ENCODE measurements at regions of chr2 and their contacts with region 1.

Region 1: DNA sequence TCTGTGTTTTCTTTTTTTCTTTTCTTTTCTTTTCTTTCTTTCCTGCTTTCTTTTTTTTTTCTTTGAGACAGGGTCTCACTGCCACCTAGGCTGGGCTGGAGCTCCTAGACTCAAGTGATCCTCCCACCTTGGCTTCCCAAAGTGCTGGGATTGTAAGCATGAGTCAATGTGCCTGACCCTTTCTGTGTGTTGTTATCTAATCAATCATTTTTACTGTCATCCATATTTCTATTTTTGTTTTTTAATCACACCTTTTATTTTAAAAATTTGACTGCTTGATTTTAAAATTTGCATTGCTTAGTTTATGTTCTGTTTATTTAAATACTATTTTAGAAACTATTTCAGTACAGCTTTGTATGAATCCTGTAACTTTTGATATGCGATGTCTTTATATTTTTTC is 19.2 kb downstream of the LCLAT1 start:
- DNase-seq: no peak
- H3K4me3 ChIP-seq: no peak overlapping the region
- H3K27ac ChIP-seq: no peak overlapping the region
- H3K4me1 ChIP-seq: no peaks in the 10 kb centered on the region
- H3K27me3 ChIP-seq: no peaks in the 10 kb centered on the region
- CTCF ChIP-seq: no peak

Region 2: GRCh38 chr2:29802986-29803385 is 663.2 kb before region 1 on chr2:
- CTCF ChIA-PET with region 1: interaction called, 10 read pairs
- POLR2A ChIA-PET with region 1: no interaction called
- intact Hi-C with region 1: no loop called
- DNase-seq: no peak
- H3K4me3 ChIP-seq: no peak overlapping the region
- H3K27ac ChIP-seq: no peak overlapping the region
- H3K4me1 ChIP-seq: no peaks in the 10 kb centered on the region
- H3K27me3 ChIP-seq: peaks cover 41% of the 10 kb centered on the region; the same call in 1 of the 2 replicates
- CTCF ChIP-seq: no peak

Region 3: GRCh38 chr2:30346471-30347169 is 119.6 kb before region 1 on chr2:
- CTCF ChIA-PET with region 1: no interaction called
- POLR2A ChIA-PET with region 1: no interaction called
- intact Hi-C with region 1: no loop called
- DNase-seq: no peak
- H3K4me3 ChIP-seq: no peak overlapping the region
- H3K27ac ChIP-seq: no peak overlapping the region
- H3K4me1 ChIP-seq: no peaks in the 10 kb centered on the region
- H3K27me3 ChIP-seq: no peaks in the 10 kb centered on the region
- CTCF ChIP-seq: no peak

Region 4: DNA sequence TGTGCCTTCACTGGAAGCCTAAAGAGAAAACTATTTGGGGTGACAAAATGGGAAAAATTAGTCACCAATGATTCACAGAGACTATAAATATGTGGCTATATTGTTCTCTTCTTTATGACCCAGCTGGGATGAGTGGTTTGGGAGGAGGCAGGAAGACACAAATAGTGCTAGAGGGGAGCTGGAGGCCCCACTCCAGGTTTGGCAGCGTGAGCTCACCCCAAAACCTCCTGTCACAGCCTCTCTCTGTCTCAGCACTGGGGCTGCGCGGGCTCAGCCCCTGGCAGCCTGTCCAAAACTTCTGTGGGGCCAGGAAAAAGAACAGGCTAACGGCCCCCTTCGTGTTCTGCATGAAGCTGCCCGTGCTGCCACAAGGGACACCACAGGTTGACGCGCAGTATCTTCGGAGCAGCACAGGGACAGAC is 92.3 kb before region 1 on chr2:
- CTCF ChIA-PET with region 1: no interaction called
- POLR2A ChIA-PET with region 1: no interaction called
- intact Hi-C with region 1: no loop called
- DNase-seq: peak in 1 of 2 experiments; percentile 49
- H3K4me3 ChIP-seq: no peak overlapping the region
- H3K27ac ChIP-seq: no peak overlapping the region
- H3K4me1 ChIP-seq: peaks cover 7% of the 10 kb centered on the region
- H3K27me3 ChIP-seq: no peaks in the 10 kb centered on the region
- CTCF ChIP-seq: no peak

Region 5: DNA sequence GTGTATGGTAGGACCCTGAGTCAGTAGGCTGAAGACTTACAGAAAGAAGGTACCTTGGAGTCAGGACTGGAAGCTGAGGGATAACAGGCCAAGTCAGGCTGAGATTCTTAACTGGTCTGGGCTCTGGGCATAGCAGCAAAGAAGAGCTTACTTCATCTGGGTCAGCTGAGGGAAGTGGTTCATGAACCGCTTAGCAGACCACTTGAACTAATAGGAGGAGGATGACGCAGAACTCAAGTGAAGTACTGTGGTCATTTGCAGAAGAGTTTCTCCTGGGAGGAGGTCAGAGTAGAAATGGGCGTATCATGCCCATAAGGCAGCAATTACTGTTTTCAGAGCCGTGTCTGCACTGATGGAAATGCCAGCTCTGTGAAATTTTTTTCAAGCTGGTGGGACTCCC is 145.4 kb after region 1 on chr2:
- CTCF ChIA-PET with region 1: no interaction called
- POLR2A ChIA-PET with region 1: no interaction called
- intact Hi-C with region 1: no loop called
- DNase-seq: no peak
- H3K4me3 ChIP-seq: no peak overlapping the region
- H3K27ac ChIP-seq: no peak overlapping the region
- H3K4me1 ChIP-seq: no peaks in the 10 kb centered on the region; the same call in 1 of the 2 replicates
- H3K27me3 ChIP-seq: no peaks in the 10 kb centered on the region
- CTCF ChIP-seq: no peak